Vagina (tissue), 2 donors: ENCODE measurements at regions of chr9 and their contacts with region 1.

Region 1: DNA sequence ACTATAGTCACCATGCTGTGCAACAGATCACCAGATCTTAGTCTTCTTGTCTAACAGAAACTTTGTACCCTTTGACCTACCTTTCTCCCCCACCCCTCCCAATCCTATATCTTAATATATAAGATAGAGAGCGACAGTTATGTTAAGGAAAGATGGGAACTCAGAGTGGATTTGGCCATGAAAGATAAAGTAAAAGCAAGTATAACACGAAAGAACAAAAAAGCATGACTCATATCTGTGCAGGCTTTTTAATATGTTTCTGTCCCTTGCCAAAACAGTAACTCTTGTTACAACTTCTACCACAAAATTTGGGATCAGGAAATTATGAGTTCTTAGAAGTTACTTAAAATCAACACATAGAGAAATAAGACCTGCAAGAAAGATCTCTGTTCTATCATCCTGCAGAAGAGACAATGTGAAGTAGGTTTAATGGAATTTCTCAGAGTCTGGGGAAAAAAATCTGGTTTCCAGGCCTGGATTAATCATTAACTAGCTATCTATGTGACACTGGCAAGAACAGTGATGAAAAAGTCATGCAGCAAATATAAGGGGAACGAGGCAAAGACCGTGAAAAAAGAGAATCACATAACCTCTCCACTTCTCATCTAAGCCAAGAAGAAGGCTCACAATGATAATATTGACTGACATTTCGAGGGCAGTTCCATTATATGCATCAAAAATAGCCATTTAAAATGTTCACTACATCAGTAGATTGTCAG is 18.6 kb downstream of the BAAT start:
- DNase-seq: no peak
- H3K4me3 ChIP-seq: no peak overlapping the region
- H3K27ac ChIP-seq: no peak overlapping the region
- H3K4me1 ChIP-seq: no peaks in the 10 kb centered on the region
- H3K27me3 ChIP-seq: no peaks in the 10 kb centered on the region
- CTCF ChIP-seq: no peak
- POLR2A ChIP-seq: no peak

Region 2: DNA sequence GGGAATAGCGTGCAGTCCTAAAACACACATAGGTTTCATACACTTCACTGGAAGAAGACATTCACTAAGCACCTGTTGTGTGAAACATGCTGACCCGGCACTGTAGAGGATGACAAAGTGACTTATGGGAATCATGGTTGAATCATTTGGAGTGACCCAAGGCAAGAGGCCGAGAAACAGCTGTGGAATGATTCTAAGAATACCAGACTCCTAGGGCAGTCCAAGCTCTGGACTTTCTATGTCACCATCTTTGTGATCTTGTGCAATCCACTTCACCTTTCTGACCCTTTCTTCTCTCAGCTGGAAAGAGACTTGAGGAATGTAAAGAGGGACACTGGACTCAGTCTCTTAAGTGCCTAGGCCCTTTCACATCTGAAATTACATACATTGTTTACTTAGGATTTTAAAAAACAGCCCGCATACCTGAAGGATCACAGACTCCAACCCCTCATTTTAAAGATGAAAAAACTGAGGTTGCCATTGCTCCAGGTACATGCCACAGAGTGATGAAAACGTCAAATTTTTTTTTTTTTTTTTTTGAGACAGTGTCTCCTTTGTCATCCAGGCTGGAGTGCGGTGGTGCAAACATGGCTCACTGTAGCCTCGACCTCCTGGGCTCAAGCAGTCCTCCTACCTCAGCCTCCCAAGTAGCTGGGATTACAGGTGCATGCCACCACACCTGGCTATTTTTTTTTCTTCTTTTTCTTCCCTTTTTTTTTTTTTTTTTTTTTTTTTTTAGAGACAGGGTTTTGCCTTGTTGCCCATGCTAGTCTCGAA is 925.9 kb before region 1 on chr9:
- intact Hi-C with region 1: loop called (anchors 10 kb)
- DNase-seq: no peak
- H3K4me3 ChIP-seq: no peak overlapping the region
- H3K27ac ChIP-seq: no peak overlapping the region
- H3K4me1 ChIP-seq: peaks cover 11% of the 10 kb centered on the region
- H3K27me3 ChIP-seq: no peaks in the 10 kb centered on the region
- CTCF ChIP-seq: no peak
- POLR2A ChIP-seq: no peak

Region 3: GRCh38 chr9:101307051-101307450 is 59.1 kb before region 1 on chr9:
- intact Hi-C with region 1: no loop called
- DNase-seq: no peak
- H3K4me3 ChIP-seq: no peak overlapping the region
- H3K27ac ChIP-seq: no peak overlapping the region
- H3K4me1 ChIP-seq: peaks cover 7% of the 10 kb centered on the region
- H3K27me3 ChIP-seq: no peaks in the 10 kb centered on the region
- CTCF ChIP-seq: no peak
- POLR2A ChIP-seq: no peak

Region 4: DNA sequence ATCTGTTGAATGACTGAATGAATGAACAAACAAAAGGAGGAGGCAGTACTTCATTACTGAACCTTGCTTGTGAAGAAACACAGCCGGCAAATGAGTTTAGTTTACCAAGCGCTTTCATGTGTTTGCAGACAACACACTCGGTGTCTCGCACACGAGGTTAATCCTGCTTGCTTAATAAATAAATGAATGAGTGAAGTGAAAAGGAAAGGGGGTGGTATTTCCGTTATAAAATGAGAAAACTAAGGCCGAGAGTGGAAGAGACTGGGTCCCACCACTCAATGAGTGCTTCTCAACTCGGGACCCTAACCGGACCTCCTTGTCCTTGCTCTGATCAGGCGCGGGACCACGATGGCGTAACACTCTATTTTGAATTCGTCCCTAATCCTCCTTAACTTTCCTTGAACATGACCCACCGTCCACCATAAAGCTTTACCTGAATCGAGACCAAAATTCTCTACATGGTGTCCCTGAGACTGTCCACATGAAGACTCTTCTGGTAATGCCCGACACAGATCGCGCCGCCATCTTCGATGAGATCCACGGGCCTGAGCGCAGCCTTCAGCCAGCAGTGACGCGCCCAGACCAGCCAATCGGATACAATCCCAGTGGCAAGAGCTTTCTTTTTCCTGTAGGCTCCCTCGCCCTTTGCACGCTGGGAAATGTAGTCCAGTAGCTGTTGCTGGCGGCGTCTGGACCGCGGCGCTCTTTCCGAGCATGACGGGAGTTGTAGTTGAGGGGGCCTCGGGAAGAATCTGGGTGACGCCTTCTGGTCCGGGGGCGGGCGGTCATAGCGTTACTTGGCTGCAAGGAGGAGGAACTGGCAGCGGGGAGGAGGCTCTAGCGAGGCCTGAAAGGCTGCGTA is 32.1 kb after region 1 on chr9 and contains the starts of genes MRPL50 and ZNF189:
- intact Hi-C with region 1: no loop called
- DNase-seq: peak; percentile 99 to 100
- H3K4me3 ChIP-seq: peak within 1 kb of the TSS; percentile 78 to 88
- H3K27ac ChIP-seq: peak within 1 kb of the TSS; percentile 87
- H3K4me1 ChIP-seq: peaks cover 45% of the 10 kb centered on the region
- H3K27me3 ChIP-seq: no peaks in the 10 kb centered on the region
- CTCF ChIP-seq: peak in 1 of 3 experiments; percentile 30
- POLR2A ChIP-seq: peak; percentile 61 to 73
- total RNA-seq, gene MRPL50: 8.8 TPM
- total RNA-seq, gene ZNF189: 12.5 TPM

Region 5: GRCh38 chr9:101458955-101459631 is 92.9 kb after region 1 on chr9:
- intact Hi-C with region 1: no loop called
- DNase-seq: no peak
- H3K4me3 ChIP-seq: no peak overlapping the region
- H3K27ac ChIP-seq: no peak overlapping the region
- H3K4me1 ChIP-seq: no peaks in the 10 kb centered on the region
- H3K27me3 ChIP-seq: no peaks in the 10 kb centered on the region
- CTCF ChIP-seq: peak; percentile 49 to 72 (median 61)
- POLR2A ChIP-seq: no peak